Activated CD4-positive, alpha-beta T cell treated with anti-CD3 and anti-CD28 coated beads, Interleukin-2, amount 10 ng/mL, durations not matched to agents 7 days and 5 days (primary cell): ENCODE measurements at regions of chr20 and their contacts with region 1.

Region 1: GRCh38 chr20:51554538-51555165 is 12.1 kb upstream of the NFATC2 start:
- DNase-seq: no peak
- H3K4me3 Mint-ChIP-seq: no peak overlapping the region
- H3K27ac Mint-ChIP-seq: no peak overlapping the region
- H3K4me1 Mint-ChIP-seq: peaks cover 1% of the 10 kb centered on the region
- H3K27me3 Mint-ChIP-seq: peaks cover 17% of the 10 kb centered on the region

Region 2: DNA sequence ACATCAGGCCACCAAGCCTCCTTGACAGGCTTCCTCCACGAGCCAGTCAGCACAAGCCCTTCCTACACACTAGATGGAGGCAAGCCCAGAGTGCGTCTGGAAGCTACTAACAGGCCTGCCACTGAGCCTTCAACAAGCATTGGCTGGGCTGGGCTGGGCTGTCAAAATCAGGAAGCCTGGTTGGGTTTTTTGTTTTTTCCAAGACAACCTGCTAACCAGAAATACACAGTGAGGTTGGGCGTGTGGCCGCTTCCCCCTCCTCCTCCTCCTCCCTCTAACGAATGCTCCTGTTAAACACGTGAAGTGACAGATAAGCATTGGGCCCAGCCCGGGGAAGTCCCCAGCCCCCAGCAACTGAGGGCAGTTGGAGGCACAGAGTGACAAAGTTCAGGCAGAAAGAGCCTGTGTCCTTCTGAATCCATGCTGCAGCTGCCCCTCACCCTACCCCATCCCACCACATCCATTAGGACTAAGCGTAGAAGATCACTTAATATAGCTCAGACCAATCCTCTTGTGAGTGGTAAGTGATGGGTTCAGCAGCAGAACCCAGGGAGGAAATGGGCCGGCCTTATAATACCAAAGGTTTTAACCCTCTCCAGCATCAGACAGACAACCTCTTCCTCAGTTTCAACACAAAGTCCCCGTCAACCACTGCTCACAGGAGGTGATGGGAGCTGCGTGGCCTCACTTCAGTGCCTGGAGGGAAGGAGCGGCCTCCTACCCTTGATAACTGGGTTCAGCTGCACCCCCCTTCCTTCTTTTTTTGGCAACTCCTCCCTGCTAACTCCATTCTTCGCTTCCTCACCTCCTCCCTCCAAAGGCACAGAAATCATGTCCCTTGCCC is 13.2 kb before region 1 on chr20:
- CTCF ChIA-PET with region 1: interaction called, 7 read pairs
- POLR2A ChIA-PET with region 1: interaction called, 11 read pairs
- DNase-seq: peak; percentile 93
- H3K4me3 Mint-ChIP-seq: peak overlapping the region; percentile 98
- H3K27ac Mint-ChIP-seq: peak overlapping the region; percentile 97
- H3K4me1 Mint-ChIP-seq: peaks cover 50% of the 10 kb centered on the region
- H3K27me3 Mint-ChIP-seq: peaks cover 16% of the 10 kb centered on the region